Activated B cell treated with CpG ODN at 0.5 μM for 24 hours (primary cell): ENCODE measurements at regions of chr6 and their contacts with region 1.

Region 1: DNA sequence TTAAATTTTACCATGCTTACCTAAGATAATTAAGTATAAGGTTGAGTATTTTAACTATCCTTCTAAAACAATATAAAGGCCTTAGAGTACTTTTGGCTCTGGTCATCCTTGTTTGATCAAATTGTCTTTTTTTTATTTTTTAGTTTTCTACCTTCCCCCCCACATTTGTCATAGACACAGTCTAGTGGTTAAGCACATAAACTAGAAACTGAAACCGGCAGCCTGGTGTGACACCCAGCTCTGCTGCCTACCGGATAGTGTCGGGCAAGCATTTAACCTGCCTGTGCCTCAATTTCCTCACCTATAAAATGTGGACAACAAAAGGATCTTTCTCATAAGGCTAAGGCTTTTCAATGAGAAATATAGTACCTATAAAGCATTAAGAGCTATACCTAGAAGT is 21.6 kb upstream of the TULP4 start:
- DNase-seq: no peak
- ATAC-seq: peak; percentile 88
- H3K4me3 Mint-ChIP-seq: peak overlapping the region; percentile 81
- H3K27ac Mint-ChIP-seq: peak overlapping the region; percentile 94
- H3K4me1 Mint-ChIP-seq: peaks cover 69% of the 10 kb centered on the region
- H3K27me3 Mint-ChIP-seq: no peaks in the 10 kb centered on the region
- CTCF ChIP-seq: no peak

Region 2: DNA sequence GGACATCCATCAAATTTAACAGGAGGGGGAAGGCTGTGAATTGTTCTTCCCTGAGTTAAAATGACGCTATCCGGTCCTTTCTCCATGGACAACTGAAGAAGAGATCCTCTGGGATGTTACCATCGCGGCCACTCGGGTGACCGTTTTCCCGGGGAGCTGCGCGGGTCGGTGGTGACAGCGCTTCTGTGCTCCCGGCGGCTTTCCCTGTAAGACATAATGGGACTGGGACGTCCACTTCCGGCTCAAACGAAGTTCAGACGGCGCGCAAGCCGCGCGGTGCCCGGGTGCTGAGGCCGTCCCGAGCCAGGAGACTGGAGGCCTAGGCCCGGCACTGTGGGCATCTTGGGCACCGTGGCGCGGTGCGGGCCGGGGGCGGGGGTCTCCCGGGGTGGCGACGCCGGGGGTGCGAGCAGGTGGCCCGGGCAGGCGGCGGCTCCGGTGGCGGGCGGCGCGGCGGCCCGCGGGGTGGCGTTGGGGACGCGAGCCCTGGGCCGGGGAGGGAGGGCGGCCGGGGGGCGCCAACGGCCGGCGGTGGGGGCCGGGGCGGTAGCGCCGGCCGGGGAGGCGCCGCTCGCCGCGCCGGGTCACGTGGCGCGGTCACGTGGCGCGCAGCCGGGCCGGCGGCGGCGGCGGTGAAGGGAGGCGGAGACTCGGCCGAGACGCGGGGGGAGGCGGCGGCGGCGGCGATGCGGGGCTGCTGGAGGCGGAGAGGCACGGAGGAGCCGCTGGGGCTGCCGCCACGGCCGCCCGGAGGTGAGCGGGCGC is 58.9 kb before region 1 on chr6:
- CTCF ChIA-PET with region 1: no interaction called
- POLR2A ChIA-PET with region 1: no interaction called
- intact Hi-C with region 1: loop called (anchors 1 kb)
- DNase-seq: peak; percentile 79
- ATAC-seq: peak; percentile 76
- H3K4me3 Mint-ChIP-seq: peak overlapping the region; percentile 92
- H3K27ac Mint-ChIP-seq: peak overlapping the region; percentile 87
- H3K4me1 Mint-ChIP-seq: peaks cover 34% of the 10 kb centered on the region
- H3K27me3 Mint-ChIP-seq: no peaks in the 10 kb centered on the region
- CTCF ChIP-seq: no peak

Region 3: GRCh38 chr6:158270389-158271127 is 20.1 kb before region 1 on chr6:
- CTCF ChIA-PET with region 1: no interaction called
- POLR2A ChIA-PET with region 1: interaction called, 3 read pairs
- intact Hi-C with region 1: loop called (anchors 2 kb)
- DNase-seq: no peak
- ATAC-seq: no peak
- H3K4me3 Mint-ChIP-seq: no peak overlapping the region
- H3K27ac Mint-ChIP-seq: no peak overlapping the region
- H3K4me1 Mint-ChIP-seq: peaks cover 37% of the 10 kb centered on the region
- H3K27me3 Mint-ChIP-seq: no peaks in the 10 kb centered on the region
- CTCF ChIP-seq: no peak

Region 4: DNA sequence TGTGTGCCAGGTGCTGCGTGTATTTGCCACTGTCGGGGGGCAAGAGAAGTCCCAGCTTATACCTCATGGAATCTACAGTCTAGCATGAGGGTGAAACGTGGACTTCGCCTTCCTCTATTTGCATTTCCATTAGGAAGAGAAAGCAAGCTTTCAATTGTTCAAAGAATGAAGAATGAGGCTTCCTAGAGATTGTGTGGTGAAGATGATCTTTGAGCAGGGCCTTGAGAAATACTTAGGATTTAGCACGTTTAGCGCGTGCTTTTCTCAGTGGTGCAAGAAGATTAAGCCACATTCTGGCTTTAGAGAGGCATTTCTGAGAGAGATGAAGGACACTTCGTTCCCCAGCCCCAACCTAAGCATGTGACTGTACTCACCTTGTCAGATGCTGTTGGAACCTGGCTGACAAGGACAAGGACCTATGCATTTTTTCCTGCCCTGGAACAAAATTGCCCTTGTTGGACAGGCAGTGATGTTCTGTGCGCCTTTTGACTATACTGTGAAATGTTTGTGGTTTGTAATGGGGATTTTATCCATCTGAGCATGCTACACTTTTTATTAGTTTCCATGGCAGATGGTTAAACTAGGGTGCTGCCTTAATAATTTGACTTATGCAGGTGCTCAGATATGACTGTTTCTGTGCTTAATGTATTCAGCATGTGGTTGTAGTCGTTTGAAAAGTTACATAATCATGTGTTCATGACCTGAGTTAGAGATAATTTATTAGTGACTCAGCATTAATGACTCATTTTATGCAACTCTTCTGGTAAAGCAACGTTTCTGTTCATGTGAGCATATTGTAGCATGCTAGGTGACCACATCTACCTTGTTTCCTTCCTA is 32.3 kb after region 1 on chr6:
- CTCF ChIA-PET with region 1: no interaction called
- POLR2A ChIA-PET with region 1: interaction called, 6 read pairs
- intact Hi-C with region 1: loop called (anchors 1 kb)
- DNase-seq: no peak
- ATAC-seq: peak; percentile 59
- H3K4me3 Mint-ChIP-seq: peak overlapping the region; percentile 25
- H3K27ac Mint-ChIP-seq: peak overlapping the region; percentile 57
- H3K4me1 Mint-ChIP-seq: peaks cover 79% of the 10 kb centered on the region
- H3K27me3 Mint-ChIP-seq: no peaks in the 10 kb centered on the region
- CTCF ChIP-seq: no peak

Region 5: DNA sequence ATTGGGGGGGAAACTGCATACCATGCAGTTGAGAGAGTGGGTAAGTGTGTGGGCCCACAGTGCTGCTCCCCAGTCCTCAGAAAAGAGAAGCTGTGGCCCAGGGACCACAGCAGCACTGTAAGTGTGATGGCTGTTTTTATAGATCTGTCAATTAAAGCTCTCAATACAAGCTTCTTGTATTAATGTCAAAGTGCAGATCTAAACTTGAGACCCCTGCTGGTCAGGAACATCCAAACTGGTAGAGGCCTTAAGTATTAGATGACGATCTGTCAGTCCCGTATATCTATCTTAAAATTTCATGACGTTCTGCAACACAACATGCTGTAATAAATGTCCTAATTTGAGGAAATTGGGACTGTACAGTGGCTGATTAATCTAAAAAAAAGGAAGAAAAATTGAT is 96.4 kb after region 1 on chr6:
- CTCF ChIA-PET with region 1: no interaction called
- POLR2A ChIA-PET with region 1: no interaction called
- intact Hi-C with region 1: loop called (anchors 1 kb)
- DNase-seq: no peak
- ATAC-seq: no peak
- H3K4me3 Mint-ChIP-seq: no peak overlapping the region
- H3K27ac Mint-ChIP-seq: no peak overlapping the region
- H3K4me1 Mint-ChIP-seq: peaks cover 6% of the 10 kb centered on the region
- H3K27me3 Mint-ChIP-seq: no peaks in the 10 kb centered on the region
- CTCF ChIP-seq: no peak